WTC11 (cell line): ENCODE measurements at regions of chr10 and their contacts with region 1.

Region 1: GRCh38 chr10:121734589-121735045 is 136.4 kb upstream of the FGFR2 start:
- DNase-seq: peak; percentile 25
- ATAC-seq: peak; percentile 62
- H3K4me3 Mint-ChIP-seq: no peak overlapping the region
- H3K27ac Mint-ChIP-seq: no peak overlapping the region
- H3K4me1 Mint-ChIP-seq: peaks cover 35% of the 10 kb centered on the region
- H3K27me3 Mint-ChIP-seq: peaks cover 9% of the 10 kb centered on the region
- CTCF ChIP-seq: peak; percentile 41

Region 2: GRCh38 chr10:121722665-121723064 is 12.0 kb before region 1 on chr10:
- CTCF ChIA-PET with region 1: interaction called, 13 read pairs
- POLR2A ChIA-PET with region 1: no interaction called
- DNase-seq: no peak
- ATAC-seq: no peak
- H3K4me3 Mint-ChIP-seq: no peak overlapping the region
- H3K27ac Mint-ChIP-seq: no peak overlapping the region
- H3K4me1 Mint-ChIP-seq: peaks cover 14% of the 10 kb centered on the region
- H3K27me3 Mint-ChIP-seq: no peaks in the 10 kb centered on the region
- CTCF ChIP-seq: no peak